ENCODE measurements at regions of chr17 and their contacts with region 1.

Region 1: GRCh38 chr17:80071116-80071980 is 30.0 kb upstream of the GAA start:
- DNase-seq: peak; percentile 54
- H3K4me3 ChIP-seq: peak overlapping the region in 1 of 2 donors; percentile 19
- H3K27ac ChIP-seq: peak overlapping the region; percentile 91 to 92
- H3K4me1 ChIP-seq: peaks cover 41% of the 10 kb centered on the region
- H3K27me3 ChIP-seq: no peaks in the 10 kb centered on the region
- CTCF ChIP-seq: no peak
- POLR2A ChIP-seq: no peak

Region 2: GRCh38 chr17:80035943-80036714 is 35.2 kb before region 1 on chr17 and contains the start of gene CCDC40:
- intact Hi-C with region 1: loop called (anchors 2 kb)
- DNase-seq: peak; percentile 79
- H3K4me3 ChIP-seq: peak within 1 kb of the TSS; percentile 47 to 55
- H3K27ac ChIP-seq: peak within 1 kb of the TSS; percentile 82 to 91
- H3K4me1 ChIP-seq: peaks cover 5% of the 10 kb centered on the region
- H3K27me3 ChIP-seq: no peaks in the 10 kb centered on the region
- CTCF ChIP-seq: peak in 1 of 4 experiments; percentile 4
- POLR2A ChIP-seq: peak; percentile 74
- total RNA-seq, gene CCDC40: 11.8 to 19.7 TPM